GM18951 (cell line): ENCODE measurements at regions of chr15 and their contacts with region 1.

Region 1: DNA sequence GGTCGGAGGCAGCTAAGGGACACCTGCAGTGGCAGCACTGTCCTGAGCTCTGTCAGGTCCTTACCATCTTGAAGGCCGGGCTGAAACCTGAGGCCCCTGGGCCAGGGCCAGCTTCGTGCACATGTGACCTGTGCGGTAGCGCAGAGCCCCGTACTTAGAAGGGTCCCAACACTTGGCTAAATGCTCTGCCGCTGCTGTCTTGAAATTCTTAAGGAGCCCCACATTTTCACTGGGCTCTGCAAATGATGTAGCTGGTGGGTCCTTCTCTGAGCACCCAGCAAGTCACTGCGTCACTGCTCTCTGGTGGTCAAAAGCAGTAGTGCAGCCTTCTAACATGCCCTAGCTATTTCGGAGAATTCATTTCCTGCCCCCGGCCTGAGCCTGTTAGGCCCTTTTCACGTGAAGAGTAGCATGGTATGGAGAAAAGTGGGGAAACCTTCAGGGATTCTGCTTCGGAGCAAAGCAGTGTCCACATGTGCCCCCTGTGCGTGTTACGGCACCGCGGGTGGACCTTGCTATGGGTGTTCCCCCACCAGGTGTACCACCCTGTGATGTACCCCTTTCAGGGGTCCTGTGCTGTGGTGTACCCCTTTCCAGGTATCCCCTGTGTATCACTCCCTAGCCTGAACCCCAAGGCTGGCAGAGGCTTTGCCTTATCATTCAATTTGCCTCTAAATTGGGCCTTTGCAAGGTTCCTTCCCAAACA is 79.7 kb downstream of the TMEM266 start:
- POLR2A ChIP-seq: no peak

Region 2: DNA sequence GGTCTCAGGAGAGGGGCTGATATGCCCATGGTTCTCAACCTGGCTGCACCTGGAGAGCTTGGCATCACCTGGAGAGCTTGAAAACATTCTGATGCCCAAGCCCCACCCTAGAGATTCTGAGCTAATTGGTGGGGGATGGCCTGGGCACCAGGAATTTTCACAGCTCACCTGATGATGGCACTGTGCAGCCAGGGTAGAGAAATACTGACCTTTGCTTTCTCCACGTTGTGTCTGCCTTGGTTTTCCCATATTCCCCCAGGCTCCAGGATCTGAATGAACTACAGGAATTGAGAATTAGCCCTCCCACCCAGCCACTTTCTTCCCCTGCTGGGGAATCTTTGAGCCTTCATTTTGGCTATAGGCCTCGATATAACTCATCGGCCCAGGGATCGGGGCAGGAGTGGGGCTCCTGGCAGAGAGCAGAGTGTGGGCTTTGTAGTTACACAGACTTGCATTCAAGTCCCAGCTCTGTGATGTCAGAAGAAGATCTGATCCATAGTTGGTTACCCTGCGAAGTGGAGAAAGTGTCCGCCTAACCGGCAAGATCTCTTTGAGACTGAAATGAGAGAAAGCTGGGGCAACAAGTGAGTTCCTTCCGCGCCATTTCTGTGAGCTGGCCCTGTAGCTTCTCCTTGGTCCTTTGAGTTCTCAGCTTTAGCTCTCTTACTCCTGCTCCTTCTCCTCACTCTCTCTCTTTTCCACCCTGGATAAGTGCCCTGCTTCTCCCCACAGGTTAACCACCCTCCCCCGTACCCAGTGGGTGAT is 329.4 kb before region 1 on chr15:
- in situ Hi-C with region 1: loop called (anchors 10 kb)
- POLR2A ChIP-seq: no peak

Region 3: GRCh38 chr15:76012021-76012551 is 127.4 kb before region 1 on chr15 and contains the start of gene NRG4:
- in situ Hi-C with region 1: no loop called
- POLR2A ChIP-seq: no peak